ENCODE measurements at regions of chr12 and their contacts with region 1.

Region 1: DNA sequence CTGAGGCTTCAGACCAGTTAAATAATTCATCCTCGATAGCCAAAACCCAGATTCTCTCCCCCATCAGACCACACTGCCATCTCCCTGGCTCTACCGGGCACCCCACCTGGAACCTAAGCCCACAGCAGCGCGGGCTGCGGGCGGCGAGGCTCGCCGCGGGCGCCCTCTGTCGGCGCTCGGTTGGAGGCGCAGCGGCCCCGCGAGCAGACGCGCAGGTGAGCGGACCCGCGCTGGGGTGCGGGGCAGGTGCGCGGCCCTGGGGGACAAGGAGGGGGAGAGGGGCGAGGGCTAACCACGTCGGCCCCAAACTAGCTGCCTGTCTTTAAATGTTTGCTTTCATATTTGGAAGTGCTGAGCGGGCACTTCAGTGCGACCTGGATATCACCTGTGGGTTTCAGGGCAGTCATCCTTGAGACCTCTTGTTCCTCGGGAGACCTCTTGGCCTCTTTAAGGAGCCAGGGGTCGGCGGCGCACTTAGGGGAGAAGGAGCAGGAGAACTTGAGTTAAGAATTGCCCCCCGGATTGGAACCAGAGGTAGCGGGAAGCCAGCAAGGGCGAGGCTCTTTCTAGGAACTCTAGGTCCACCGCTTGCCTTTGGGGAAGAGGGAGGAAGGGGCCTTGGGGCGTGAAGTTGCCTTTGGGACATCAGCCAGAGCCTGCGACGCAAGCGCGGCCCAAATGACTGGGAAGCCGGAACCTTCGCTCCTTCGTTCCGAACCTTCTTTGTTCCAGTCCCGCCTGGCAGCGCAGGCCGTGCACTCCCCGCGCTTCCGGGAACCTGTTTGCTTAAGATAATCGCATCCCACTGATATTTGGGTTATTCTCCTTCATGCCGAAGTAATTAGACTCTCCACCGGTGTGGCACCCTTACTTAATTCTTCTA is 78.7 kb downstream of the NEDD1 start:
- DNase-seq: peak; percentile 15
- H3K4me3 ChIP-seq: peak overlapping the region; percentile 37
- H3K27ac ChIP-seq: no peak overlapping the region
- H3K4me1 ChIP-seq: no peaks in the 10 kb centered on the region
- H3K27me3 ChIP-seq: peaks cover 43% of the 10 kb centered on the region
- CTCF ChIP-seq: peak; percentile 75

Region 2: GRCh38 chr12:96177013-96177412 is 808.7 kb before region 1 on chr12:
- CTCF ChIA-PET with region 1: no interaction called
- POLR2A ChIA-PET with region 1: no interaction called
- intact Hi-C with region 1: no loop called
- DNase-seq: no peak
- H3K4me3 ChIP-seq: no peak overlapping the region
- H3K27ac ChIP-seq: no peak overlapping the region
- H3K4me1 ChIP-seq: no peaks in the 10 kb centered on the region
- H3K27me3 ChIP-seq: no peaks in the 10 kb centered on the region
- CTCF ChIP-seq: no peak

Region 3: GRCh38 chr12:96578526-96579125 is 407.1 kb before region 1 on chr12:
- CTCF ChIA-PET with region 1: no interaction called
- POLR2A ChIA-PET with region 1: no interaction called
- intact Hi-C with region 1: loop called (anchors 2 kb)
- DNase-seq: peak; percentile 75
- H3K4me3 ChIP-seq: no peak overlapping the region
- H3K27ac ChIP-seq: no peak overlapping the region
- H3K4me1 ChIP-seq: no peaks in the 10 kb centered on the region
- H3K27me3 ChIP-seq: peaks cover 4% of the 10 kb centered on the region
- CTCF ChIP-seq: peak; percentile 72

Region 4: GRCh38 chr12:97308576-97309198 is 323.0 kb after region 1 on chr12:
- CTCF ChIA-PET with region 1: no interaction called
- POLR2A ChIA-PET with region 1: no interaction called
- intact Hi-C with region 1: loop called (anchors 2 kb)
- DNase-seq: peak; percentile 52
- H3K4me3 ChIP-seq: no peak overlapping the region
- H3K27ac ChIP-seq: no peak overlapping the region
- H3K4me1 ChIP-seq: no peaks in the 10 kb centered on the region
- H3K27me3 ChIP-seq: peaks cover 52% of the 10 kb centered on the region
- CTCF ChIP-seq: peak; percentile 76

Region 5: DNA sequence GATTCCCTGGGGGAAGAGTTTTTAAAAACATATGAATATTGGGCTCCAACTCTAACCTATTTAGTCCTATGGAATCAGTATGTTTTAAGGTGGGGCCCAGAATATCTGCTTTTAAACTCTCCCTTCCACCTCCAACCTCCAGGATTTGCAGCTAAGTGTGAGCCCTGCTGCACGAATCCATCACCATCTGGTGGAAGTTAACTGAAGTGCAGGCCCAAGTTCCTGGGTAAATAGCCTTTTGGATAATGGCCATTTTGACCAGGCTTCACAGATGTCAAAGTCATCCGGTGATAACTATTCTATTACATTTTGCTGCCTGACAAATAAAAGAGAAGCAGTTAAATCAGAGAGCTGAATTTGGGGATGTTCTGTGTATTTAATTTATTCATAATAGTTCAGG is 418.8 kb after region 1 on chr12:
- CTCF ChIA-PET with region 1: no interaction called
- POLR2A ChIA-PET with region 1: no interaction called
- intact Hi-C with region 1: loop called (anchors 5 kb)
- DNase-seq: peak; percentile 49
- H3K4me3 ChIP-seq: no peak overlapping the region
- H3K27ac ChIP-seq: no peak overlapping the region
- H3K4me1 ChIP-seq: no peaks in the 10 kb centered on the region
- H3K27me3 ChIP-seq: peaks cover 16% of the 10 kb centered on the region
- CTCF ChIP-seq: peak; percentile 73

Region 6: GRCh38 chr12:98154850-98155249 is 1169.1 kb after region 1 on chr12:
- CTCF ChIA-PET with region 1: no interaction called
- POLR2A ChIA-PET with region 1: no interaction called
- intact Hi-C with region 1: loop called (anchors 10 kb)
- DNase-seq: peak; percentile 77
- H3K4me3 ChIP-seq: no peak overlapping the region
- H3K27ac ChIP-seq: no peak overlapping the region
- H3K4me1 ChIP-seq: peaks cover 36% of the 10 kb centered on the region
- H3K27me3 ChIP-seq: no peaks in the 10 kb centered on the region
- CTCF ChIP-seq: peak; percentile 74

Region 7: DNA sequence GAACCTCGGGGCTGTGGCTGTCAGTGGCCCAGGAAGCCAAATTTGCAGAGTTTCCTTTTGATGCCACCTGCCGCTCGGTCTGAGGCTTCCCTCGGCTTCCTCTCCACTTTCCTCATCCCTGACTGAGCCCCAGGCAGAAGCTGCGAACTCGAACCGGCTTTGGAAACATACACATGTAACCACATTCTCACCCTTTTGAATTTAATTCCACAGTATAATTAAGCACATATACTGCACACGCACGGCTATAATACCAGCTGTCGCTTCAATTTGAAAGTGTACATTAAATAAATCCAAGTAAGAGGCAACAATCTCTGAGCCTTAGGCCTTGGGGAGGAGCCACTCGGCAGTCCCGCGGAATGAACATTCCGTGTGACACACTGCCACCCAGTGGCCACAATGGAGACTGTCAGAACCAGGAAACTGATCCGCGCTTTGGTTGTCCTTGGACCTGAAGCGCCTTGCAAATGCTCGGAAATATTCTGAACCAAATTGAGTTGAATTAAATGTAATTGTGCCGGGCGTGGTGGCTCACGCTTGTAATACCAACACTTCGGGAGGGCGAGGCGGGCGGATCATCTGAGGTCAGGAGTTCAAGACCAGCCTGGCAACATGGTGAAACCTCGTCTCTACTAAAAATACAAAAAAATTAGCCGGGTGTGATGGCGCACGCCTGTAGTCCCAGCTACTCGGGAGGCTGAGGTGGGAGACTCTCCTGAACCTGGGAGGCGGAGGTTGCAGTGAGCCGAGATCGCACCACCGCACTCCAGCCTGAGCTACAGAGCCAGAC is 1411.8 kb after region 1 on chr12:
- CTCF ChIA-PET with region 1: no interaction called
- POLR2A ChIA-PET with region 1: no interaction called
- intact Hi-C with region 1: loop called (anchors 2 kb)
- DNase-seq: peak; percentile 89
- H3K4me3 ChIP-seq: no peak overlapping the region
- H3K27ac ChIP-seq: no peak overlapping the region
- H3K4me1 ChIP-seq: peaks cover 32% of the 10 kb centered on the region
- H3K27me3 ChIP-seq: no peaks in the 10 kb centered on the region
- CTCF ChIP-seq: peak; percentile 92

Measured in A673 (cell line).